ENCODE measurements at regions of chr5 and their contacts with region 1.

Region 1: DNA sequence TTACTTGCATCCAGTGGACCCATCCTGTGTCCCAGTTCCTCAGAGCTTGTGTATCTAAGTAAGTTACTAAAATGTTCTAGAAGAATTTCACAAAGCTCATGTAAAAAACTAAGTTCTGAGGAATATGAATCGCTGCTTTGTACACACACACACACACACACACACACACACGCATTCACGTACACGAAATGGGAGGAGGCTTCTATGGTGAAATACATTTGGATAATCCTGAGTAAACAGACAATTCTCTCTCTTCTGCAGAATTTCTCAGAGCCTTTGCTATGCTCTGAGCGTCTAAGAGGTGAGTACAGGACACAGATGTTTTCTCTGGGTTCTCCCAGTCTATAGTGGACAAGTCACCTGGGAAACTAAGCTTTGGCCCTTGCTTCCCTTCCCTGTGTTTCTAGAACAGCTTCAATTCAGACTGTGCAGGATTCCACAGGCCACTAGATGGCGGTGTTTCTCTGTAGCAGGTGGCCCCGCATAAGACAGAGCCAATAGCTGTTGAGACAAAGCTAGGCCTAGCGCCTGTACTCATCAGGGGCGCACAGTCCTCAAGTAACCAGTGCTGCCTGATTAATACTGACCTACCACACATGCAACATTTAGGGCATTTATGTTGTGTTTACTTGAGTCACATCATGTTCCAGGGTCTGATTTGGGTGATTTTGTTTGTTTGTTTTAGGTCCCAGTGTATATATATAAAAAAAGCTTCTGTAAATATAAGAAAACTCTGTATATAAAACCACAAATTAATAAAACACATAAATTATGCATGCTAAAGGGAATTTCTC is 114.8 kb downstream of the LIFR start:
- DNase-seq: peak; percentile 92
- H3K4me3 Mint-ChIP-seq: no peak overlapping the region
- H3K27ac Mint-ChIP-seq: no peak overlapping the region
- H3K4me1 Mint-ChIP-seq: no peaks in the 10 kb centered on the region
- H3K27me3 Mint-ChIP-seq: peaks cover 40% of the 10 kb centered on the region

Region 2: DNA sequence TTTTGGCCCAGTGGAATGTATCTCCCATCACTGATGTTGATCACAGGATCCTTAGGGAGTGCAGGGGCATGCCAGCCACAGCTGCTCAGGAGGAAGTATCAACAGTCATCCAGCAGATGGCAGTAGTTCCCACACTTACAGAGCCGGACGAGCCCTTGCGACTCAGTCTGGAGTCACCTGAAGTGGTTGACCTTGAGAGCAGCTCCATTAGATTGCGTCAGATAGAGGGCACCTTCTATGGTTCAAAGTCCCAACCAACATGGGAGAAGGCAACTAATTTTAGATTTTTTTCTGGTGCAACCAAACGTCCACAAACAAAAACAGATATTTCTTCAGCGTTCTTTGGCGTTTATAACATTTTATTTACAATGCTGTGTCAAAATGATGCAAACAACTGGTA is 58.8 kb before region 1 on chr5:
- CTCF ChIA-PET with region 1: interaction called, 13 read pairs
- intact Hi-C with region 1: loop called (anchors 1 kb)
- DNase-seq: peak; percentile 76
- H3K4me3 Mint-ChIP-seq: no peak overlapping the region
- H3K27ac Mint-ChIP-seq: no peak overlapping the region
- H3K4me1 Mint-ChIP-seq: peaks cover 22% of the 10 kb centered on the region
- H3K27me3 Mint-ChIP-seq: no peaks in the 10 kb centered on the region

Region 3: DNA sequence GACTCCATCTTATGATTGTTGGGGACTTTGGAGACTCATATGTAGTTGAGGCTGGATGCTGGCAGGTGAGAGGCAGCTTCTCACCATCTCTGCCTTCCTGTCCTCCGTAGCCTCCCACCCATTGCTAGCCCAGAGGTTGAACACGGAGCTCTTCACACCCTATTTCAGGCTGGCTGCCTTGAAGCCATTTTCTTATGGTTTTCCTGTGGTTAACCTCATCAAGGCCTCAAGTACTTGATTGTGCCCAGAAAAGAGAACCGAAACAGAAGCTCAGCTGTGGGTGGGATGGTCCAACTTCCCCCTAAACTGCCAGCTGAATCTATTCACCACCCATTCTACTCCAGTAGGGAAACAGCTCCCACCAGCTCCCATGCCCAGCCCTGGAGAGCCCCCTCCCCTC is 11.9 kb after region 1 on chr5:
- CTCF ChIA-PET with region 1: interaction called, 27 read pairs
- intact Hi-C with region 1: no loop called
- DNase-seq: peak; percentile 48
- H3K4me3 Mint-ChIP-seq: no peak overlapping the region
- H3K27ac Mint-ChIP-seq: no peak overlapping the region
- H3K4me1 Mint-ChIP-seq: peaks cover 24% of the 10 kb centered on the region
- H3K27me3 Mint-ChIP-seq: peaks cover 69% of the 10 kb centered on the region

Region 4: GRCh38 chr5:38556599-38557305 is 115.1 kb after region 1 on chr5 and contains the start of gene LIFR:
- CTCF ChIA-PET with region 1: interaction called, 14 read pairs
- intact Hi-C with region 1: loop called (anchors 1 kb)
- DNase-seq: peak; percentile 66
- H3K4me3 Mint-ChIP-seq: peak within 1 kb of the TSS; percentile 79
- H3K27ac Mint-ChIP-seq: no peak within 1 kb of the TSS
- H3K4me1 Mint-ChIP-seq: peaks cover 7% of the 10 kb centered on the region
- H3K27me3 Mint-ChIP-seq: peaks cover 52% of the 10 kb centered on the region
- total RNA-seq, gene LIFR: 0.20 TPM in 1 of 2 experiments, not detected in the other

Region 5: GRCh38 chr5:38837416-38837815 is 395.8 kb after region 1 on chr5:
- CTCF ChIA-PET with region 1: interaction called, 10 read pairs
- intact Hi-C with region 1: no loop called
- DNase-seq: no peak
- H3K4me3 Mint-ChIP-seq: no peak overlapping the region
- H3K27ac Mint-ChIP-seq: no peak overlapping the region
- H3K4me1 Mint-ChIP-seq: no peaks in the 10 kb centered on the region
- H3K27me3 Mint-ChIP-seq: peaks cover 12% of the 10 kb centered on the region

Region 6: GRCh38 chr5:39570403-39571027 is 1128.9 kb after region 1 on chr5:
- CTCF ChIA-PET with region 1: interaction called, 6 read pairs
- intact Hi-C with region 1: loop called (anchors 5 kb)
- DNase-seq: no peak
- H3K4me3 Mint-ChIP-seq: no peak overlapping the region
- H3K27ac Mint-ChIP-seq: no peak overlapping the region
- H3K4me1 Mint-ChIP-seq: no peaks in the 10 kb centered on the region
- H3K27me3 Mint-ChIP-seq: peaks cover 5% of the 10 kb centered on the region

Measured in activated naive CD4-positive, alpha-beta T cell treated with anti-CD3 and anti-CD28 coated beads for 36 hours (primary cell).